ENCODE measurements at regions of chr6 and their contacts with region 1.

Region 1: GRCh38 chr6:108171291-108171917 is 5.6 kb downstream of the NR2E1 start:
- DNase-seq: no peak
- ATAC-seq: no peak
- H3K4me3 ChIP-seq: no peak overlapping the region
- H3K27ac ChIP-seq: no peak overlapping the region
- H3K4me1 ChIP-seq: no peaks in the 10 kb centered on the region; the same call in 1 of the 2 replicates
- H3K27me3 ChIP-seq: no peaks in the 10 kb centered on the region; the same call in 1 of the 2 replicates
- CTCF ChIP-seq: no peak

Region 2: DNA sequence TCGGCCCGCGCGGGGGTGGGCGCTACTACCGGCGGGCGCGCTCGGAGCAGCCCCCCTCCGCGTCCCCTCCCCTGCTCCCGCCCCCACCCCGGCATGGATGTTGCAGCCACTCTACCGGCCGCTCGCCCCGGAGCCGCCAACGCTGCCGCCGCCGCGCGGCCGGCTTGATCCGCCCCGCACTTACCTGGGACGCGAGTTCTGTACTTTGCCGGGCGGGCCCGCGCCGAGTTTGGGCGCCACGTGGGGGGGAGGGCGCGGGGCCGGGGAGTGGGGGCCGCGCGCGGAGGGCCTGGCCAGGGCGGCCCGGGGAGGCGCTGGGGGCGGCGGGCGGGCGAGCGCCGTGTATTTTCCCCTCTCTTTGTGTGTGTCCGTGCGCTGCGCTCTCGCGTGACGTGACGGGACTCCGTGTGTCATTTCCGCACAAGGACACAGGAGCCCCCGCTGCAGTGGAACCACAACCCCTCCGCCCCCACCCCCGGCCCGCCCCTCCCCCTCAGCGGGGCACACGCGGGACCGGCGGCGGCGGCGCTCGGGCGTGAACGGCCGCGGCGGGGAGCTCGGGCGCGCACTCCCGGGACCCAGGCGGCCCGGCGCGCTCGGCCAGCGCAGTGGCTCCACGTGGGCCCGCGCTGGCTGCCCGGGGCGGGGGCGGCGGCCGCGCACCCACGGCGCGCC is 1056.4 kb before region 1 on chr6 and contains the start of gene BEND3:
- CTCF ChIA-PET with region 1: no interaction called
- POLR2A ChIA-PET with region 1: no interaction called
- in situ Hi-C with region 1: no loop called
- intact Hi-C with region 1: no loop called
- DNase-seq: no peak
- ATAC-seq: peak; percentile 70
- H3K4me3 ChIP-seq: peak within 1 kb of the TSS; percentile 77 to 85
- H3K27ac ChIP-seq: peak within 1 kb of the TSS; percentile 77
- H3K4me1 ChIP-seq: peaks cover 16% of the 10 kb centered on the region
- H3K27me3 ChIP-seq: no peaks in the 10 kb centered on the region
- CTCF ChIP-seq: no peak
- total RNA-seq, gene BEND3: 9.9 TPM

Region 3: DNA sequence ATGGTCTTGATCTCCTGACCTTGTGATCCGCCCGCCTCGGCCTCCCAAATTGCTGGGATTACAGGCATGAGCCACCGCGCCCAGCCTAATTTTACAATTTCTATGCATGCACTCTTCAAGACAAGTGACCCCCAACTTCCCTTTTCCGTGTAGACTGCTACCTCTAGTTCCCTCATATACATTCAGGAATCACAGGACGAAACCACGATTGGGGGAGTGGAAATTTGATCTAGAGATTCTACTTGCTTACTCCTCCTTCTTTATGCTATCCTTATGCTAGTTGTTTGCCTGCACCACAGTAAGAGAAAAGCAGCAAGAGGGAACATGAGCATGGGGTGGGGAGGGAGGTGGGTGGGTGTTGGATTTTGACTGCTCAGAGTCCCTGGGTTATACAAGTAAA is 131.7 kb before region 1 on chr6:
- CTCF ChIA-PET with region 1: interaction called, 11 read pairs
- POLR2A ChIA-PET with region 1: no interaction called
- in situ Hi-C with region 1: no loop called
- intact Hi-C with region 1: no loop called
- DNase-seq: no peak
- ATAC-seq: no peak
- H3K4me3 ChIP-seq: no peak overlapping the region
- H3K27ac ChIP-seq: no peak overlapping the region
- H3K4me1 ChIP-seq: no peaks in the 10 kb centered on the region
- H3K27me3 ChIP-seq: no peaks in the 10 kb centered on the region
- CTCF ChIP-seq: no peak

Region 4: GRCh38 chr6:108145639-108146038 is 25.8 kb before region 1 on chr6:
- CTCF ChIA-PET with region 1: no interaction called
- POLR2A ChIA-PET with region 1: no interaction called
- in situ Hi-C with region 1: no loop called
- intact Hi-C with region 1: no loop called
- DNase-seq: no peak
- ATAC-seq: no peak
- H3K4me3 ChIP-seq: no peak overlapping the region
- H3K27ac ChIP-seq: no peak overlapping the region
- H3K4me1 ChIP-seq: no peaks in the 10 kb centered on the region
- H3K27me3 ChIP-seq: peaks cover 13% of the 10 kb centered on the region; the same call in 1 of the 2 replicates
- CTCF ChIP-seq: no peak

Region 5: GRCh38 chr6:109002051-109002697 is 830.8 kb after region 1 on chr6:
- CTCF ChIA-PET with region 1: no interaction called
- POLR2A ChIA-PET with region 1: no interaction called
- in situ Hi-C with region 1: no loop called
- intact Hi-C with region 1: no loop called
- DNase-seq: no peak
- ATAC-seq: no peak
- H3K4me3 ChIP-seq: no peak overlapping the region
- H3K27ac ChIP-seq: no peak overlapping the region
- H3K4me1 ChIP-seq: no peaks in the 10 kb centered on the region
- H3K27me3 ChIP-seq: no peaks in the 10 kb centered on the region
- CTCF ChIP-seq: no peak

Measured in Panc1 (cell line).